Naive thymus-derived CD4-positive, alpha-beta T cell (primary cell): ENCODE measurements at regions of chr6 and their contacts with region 1.

Region 1: DNA sequence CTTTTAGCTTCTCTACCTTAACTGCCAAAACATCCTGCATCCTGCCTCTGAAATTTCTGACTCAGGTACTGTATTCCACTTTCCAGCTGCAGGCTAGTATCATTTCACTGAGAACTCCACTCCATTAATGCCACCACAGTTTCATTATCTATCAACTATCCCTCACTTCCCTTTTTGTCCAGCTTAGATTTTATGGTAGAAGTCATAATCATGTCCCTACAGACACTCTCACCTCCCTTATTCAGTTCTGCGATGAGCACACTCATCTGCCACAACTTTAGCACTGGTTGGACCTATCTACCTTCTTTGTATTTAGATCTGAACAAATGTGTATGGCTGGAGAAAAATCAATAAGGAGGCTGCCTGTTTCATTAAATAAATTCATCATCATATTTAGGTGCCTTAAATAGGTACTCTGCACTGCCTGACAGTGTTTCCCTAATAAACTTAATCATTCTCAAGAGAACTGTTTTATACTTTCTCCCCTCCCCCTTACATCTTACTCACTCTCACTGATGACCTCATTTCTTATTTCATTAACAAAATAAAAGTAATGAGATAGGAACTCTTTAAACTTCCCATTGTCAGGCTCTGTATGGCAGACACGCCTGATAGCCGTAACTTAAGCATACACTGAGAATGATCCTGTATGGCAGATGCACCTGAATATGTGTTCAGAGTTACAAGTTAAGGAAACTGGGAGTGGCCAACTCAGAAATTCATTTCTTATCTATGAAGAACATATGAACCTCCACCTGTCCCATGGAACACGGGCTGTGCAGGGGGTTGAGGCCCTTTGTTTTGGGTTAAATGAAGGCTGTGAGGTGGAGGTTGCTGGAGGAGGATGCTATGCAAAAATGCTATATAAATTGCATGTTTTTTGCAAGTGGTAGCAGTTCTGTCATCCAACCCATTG is 95.3 kb upstream of the MAN1A1 start:
- DNase-seq: no peak
- ATAC-seq: peak; percentile 27
- H3K4me3 ChIP-seq: no peak overlapping the region
- H3K4me3 Mint-ChIP-seq: peak overlapping the region in 1 of 10 donors; percentile 5
- H3K27ac ChIP-seq: no peak overlapping the region
- H3K27ac Mint-ChIP-seq: peak overlapping the region in 1 of 9 donors; percentile 34
- H3K4me1 ChIP-seq: no peaks in the 10 kb centered on the region
- H3K4me1 Mint-ChIP-seq: peaks cover 0 to 48% (median 0%) of the 10 kb centered on the region in 7 donors
- H3K27me3 ChIP-seq: no peaks in the 10 kb centered on the region
- H3K27me3 Mint-ChIP-seq: peaks cover 0 to 3% (median 0%) of the 10 kb centered on the region in 5 donors

Region 2: GRCh38 chr6:119463081-119463626 is 18.3 kb after region 1 on chr6:
- CTCF ChIA-PET with region 1: no interaction called
- POLR2A ChIA-PET with region 1: no interaction called
- intact Hi-C with region 1: loop called in 1 of 2 experiments (anchors 2 kb)
- DNase-seq: no peak
- ATAC-seq: no peak
- H3K4me3 ChIP-seq: no peak overlapping the region
- H3K4me3 Mint-ChIP-seq: peak overlapping the region in 1 of 10 donors; percentile 59
- H3K27ac ChIP-seq: no peak overlapping the region
- H3K27ac Mint-ChIP-seq: peak overlapping the region in 1 of 9 donors; percentile 94
- H3K4me1 ChIP-seq: no peaks in the 10 kb centered on the region
- H3K4me1 Mint-ChIP-seq: peaks cover 0 to 61% (median 4%) of the 10 kb centered on the region in 7 donors
- H3K27me3 ChIP-seq: no peaks in the 10 kb centered on the region
- H3K27me3 Mint-ChIP-seq: no peaks in the 10 kb centered on the region

Region 3: DNA sequence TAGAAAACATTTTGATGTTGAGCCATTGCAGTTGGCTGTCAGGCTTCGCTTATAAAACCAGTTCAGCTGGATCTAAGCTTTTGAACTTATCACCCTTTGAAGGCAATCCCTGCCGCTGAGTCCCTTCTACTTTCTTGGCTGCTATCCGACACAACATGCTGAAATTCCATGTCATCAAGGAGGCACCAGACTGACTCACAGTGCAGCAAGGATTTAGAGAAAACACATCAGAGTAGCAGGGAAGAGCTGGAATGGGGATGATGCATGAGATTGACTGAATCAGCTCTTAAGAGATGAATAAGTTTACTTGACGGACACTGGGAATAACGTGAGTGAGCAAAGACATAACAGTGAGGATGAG is 39.7 kb after region 1 on chr6:
- CTCF ChIA-PET with region 1: no interaction called
- POLR2A ChIA-PET with region 1: no interaction called
- intact Hi-C with region 1: no loop called
- DNase-seq: no peak
- ATAC-seq: no peak
- H3K4me3 ChIP-seq: no peak overlapping the region
- H3K4me3 Mint-ChIP-seq: no peak overlapping the region
- H3K27ac ChIP-seq: no peak overlapping the region
- H3K27ac Mint-ChIP-seq: no peak overlapping the region
- H3K4me1 ChIP-seq: no peaks in the 10 kb centered on the region
- H3K4me1 Mint-ChIP-seq: peaks cover 0 to 9% (median 0%) of the 10 kb centered on the region in 7 donors
- H3K27me3 ChIP-seq: no peaks in the 10 kb centered on the region
- H3K27me3 Mint-ChIP-seq: peaks cover 0 to 12% (median 7%) of the 10 kb centered on the region in 5 donors

Region 4: GRCh38 chr6:119501798-119502483 is 57.0 kb after region 1 on chr6:
- CTCF ChIA-PET with region 1: no interaction called
- POLR2A ChIA-PET with region 1: no interaction called
- intact Hi-C with region 1: loop called in 1 of 2 experiments (anchors 5 kb)
- DNase-seq: no peak
- ATAC-seq: no peak
- H3K4me3 ChIP-seq: no peak overlapping the region
- H3K4me3 Mint-ChIP-seq: no peak overlapping the region
- H3K27ac ChIP-seq: no peak overlapping the region
- H3K27ac Mint-ChIP-seq: no peak overlapping the region
- H3K4me1 ChIP-seq: no peaks in the 10 kb centered on the region
- H3K4me1 Mint-ChIP-seq: no peaks in the 10 kb centered on the region
- H3K27me3 ChIP-seq: no peaks in the 10 kb centered on the region
- H3K27me3 Mint-ChIP-seq: peaks cover 0 to 31% (median 0%) of the 10 kb centered on the region in 5 donors